Tibial artery (tissue), 4 donors: ENCODE measurements at regions of chr14 and their contacts with region 1.

Region 1: GRCh38 chr14:73851644-73852382 is at the start of gene PTGR2:
- DNase-seq: peak; percentile 95 to 97
- H3K4me3 ChIP-seq: peak within 1 kb of the TSS; percentile 62 to 71
- H3K27ac ChIP-seq: peak within 1 kb of the TSS; percentile 89 to 93
- H3K4me1 ChIP-seq: peaks cover 0 to 14% (median 8%) of the 10 kb centered on the region in 4 donors
- H3K27me3 ChIP-seq: no peaks in the 10 kb centered on the region
- CTCF ChIP-seq: peak in 1 of 2 experiments; percentile 39

Region 2: DNA sequence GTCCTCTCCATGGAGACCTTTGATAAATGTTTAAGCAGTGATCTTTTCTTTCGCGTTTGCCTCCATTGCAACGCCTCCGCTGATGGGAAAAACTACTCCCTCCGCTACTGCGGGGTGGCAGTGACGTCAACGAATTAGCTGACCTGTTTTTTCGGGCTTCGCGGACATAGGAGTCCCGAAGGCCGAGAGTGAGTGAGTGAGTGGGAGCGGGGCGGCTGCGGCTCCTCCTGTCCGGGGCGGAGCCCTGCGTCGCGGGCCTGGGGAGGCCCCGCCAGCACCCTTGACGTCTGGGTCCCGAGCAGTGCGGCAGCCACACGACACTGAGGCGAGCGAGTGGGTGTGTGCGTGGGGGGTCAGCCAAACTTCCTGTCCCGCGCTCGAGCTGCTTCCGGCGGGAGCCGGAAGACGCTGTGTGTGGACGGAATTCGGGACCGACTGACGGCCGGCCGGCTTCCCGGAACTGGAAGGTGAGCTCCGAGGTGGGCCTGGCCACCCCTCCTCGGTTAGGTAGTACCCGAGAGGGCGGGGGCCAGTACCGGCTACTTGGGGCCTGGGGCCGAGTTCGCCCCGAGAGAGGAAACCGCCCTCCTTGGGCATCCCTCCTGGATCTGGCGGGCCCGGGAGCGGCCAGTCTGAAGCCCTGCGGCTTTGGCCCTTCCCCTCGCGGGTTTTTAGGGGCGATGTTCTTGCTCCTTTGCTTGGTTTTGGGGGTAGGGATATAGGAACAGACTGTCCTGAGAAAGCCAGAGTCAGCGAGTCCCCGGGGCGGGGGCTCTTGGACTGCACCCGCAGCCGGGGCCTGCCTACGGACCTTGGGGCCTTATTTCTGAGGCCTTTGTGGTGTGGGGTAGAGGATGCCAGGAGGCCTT is 34.9 kb after region 1 on chr14 and contains the start of gene ZNF410:
- intact Hi-C with region 1: loop called (anchors 2 kb)
- DNase-seq: peak; percentile 94 to 98
- H3K4me3 ChIP-seq: peak within 1 kb of the TSS; percentile 74 to 98
- H3K27ac ChIP-seq: peak within 1 kb of the TSS; percentile 93 to 95
- H3K4me1 ChIP-seq: peaks cover 0 to 33% (median 23%) of the 10 kb centered on the region in 4 donors
- H3K27me3 ChIP-seq: no peaks in the 10 kb centered on the region
- CTCF ChIP-seq: no peak